HepG2 (cell line): ENCODE measurements at regions of chr6 and their contacts with region 1.

Region 1: DNA sequence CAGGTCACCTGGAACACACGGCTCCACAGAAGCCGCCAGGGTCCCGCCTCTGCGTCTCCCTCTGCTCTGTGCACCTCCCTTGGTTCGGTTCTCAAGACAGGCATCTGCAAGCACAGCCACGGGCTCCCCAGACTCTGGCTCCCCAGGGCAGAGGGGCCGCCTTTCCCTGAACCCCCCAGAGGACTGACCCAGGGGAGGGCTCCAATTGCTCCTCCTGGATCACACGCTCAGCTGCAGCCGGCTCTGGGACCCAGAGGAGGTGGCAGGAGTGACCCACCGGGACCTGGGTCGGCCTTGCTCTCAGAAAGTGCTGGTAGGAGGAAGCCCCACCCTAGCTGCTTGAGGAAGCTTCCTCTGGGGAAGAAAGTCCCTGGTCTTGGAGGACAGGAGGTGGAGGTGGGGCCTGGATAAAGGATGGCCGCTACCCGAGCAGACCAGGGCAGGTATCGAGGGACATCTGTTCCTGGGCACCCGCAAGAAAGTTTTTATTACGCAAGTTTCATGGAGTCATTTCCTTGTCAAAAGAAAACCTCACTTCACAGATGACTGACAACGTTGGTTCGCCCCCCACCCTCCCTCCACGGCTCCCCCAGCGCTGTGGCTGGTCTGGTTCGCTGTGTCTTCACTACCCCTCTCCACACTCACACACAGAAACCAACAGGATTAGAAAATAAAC is 103.9 kb upstream of the AFDN start:
- DNase-seq: no peak
- ATAC-seq: no peak
- H3K4me3 ChIP-seq: no peak overlapping the region
- H3K27ac ChIP-seq: no peak overlapping the region
- H3K4me1 ChIP-seq: peaks cover 9% of the 10 kb centered on the region
- H3K27me3 ChIP-seq: no peaks in the 10 kb centered on the region
- CTCF ChIP-seq: no peak
- EP300 ChIP-seq: no peak
- POLR2A ChIP-seq: no peak
- RAD21 ChIP-seq: no peak

Region 2: DNA sequence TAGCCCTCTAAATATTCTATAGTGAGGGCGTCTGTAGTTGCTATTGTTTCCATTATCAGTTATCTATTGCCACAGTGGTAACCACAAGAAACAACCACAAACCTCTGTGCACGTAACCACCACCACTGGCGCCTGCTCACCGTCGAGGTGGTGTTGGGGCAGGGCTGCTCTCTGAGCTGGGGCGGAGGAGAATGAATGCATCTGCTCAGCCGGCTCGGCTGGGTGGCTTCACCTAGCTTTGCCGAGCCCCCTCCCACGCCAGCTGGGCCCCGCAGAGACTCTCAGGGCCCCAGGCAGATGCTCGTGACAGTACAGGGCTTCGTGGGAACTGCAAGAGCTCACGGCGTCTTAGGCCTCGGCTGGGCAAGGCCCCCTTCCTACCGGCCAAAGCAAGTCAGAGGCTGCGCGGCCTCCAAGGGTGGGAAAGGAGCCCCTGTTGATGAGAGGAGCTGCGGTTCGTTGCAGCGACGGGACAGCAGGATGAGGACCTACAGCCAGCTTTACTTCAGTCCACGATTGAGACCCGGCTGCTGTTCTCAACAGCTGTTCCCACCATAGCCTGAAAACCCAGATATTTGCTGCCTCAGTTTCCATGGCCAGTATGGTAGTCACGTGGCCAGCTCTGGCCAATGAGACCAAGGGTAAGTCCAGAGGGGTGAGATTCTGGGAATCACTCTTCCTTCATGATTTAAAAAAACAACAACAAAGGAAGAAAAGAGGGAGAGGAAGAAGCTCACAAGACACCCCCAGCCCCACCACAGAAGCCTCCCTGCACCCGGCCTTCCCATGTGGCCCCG is 16.3 kb before region 1 on chr6:
- CTCF ChIA-PET with region 1: no interaction called
- POLR2A ChIA-PET with region 1: no interaction called
- in situ Hi-C with region 1: no loop called
- intact Hi-C with region 1: loop called (anchors 1 kb)
- DNase-seq: no peak
- ATAC-seq: no peak
- H3K4me3 ChIP-seq: no peak overlapping the region
- H3K27ac ChIP-seq: no peak overlapping the region
- H3K4me1 ChIP-seq: peaks cover 44% of the 10 kb centered on the region
- H3K27me3 ChIP-seq: no peaks in the 10 kb centered on the region; a peak in 1 of 5 replicates
- CTCF ChIP-seq: no peak
- EP300 ChIP-seq: no peak
- POLR2A ChIP-seq: no peak
- RAD21 ChIP-seq: no peak

Region 3: GRCh38 chr6:167791001-167791779 is 68.4 kb after region 1 on chr6:
- CTCF ChIA-PET with region 1: no interaction called
- POLR2A ChIA-PET with region 1: no interaction called
- in situ Hi-C with region 1: no loop called
- intact Hi-C with region 1: no loop called
- DNase-seq: peak; percentile 53
- ATAC-seq: peak; percentile 68
- H3K4me3 ChIP-seq: peak overlapping the region in 2 of 3 experiments; percentile 3 to 44; a peak in 2 of 6 replicates
- H3K27ac ChIP-seq: no peak overlapping the region
- H3K4me1 ChIP-seq: peaks cover 52% of the 10 kb centered on the region
- H3K27me3 ChIP-seq: peaks cover 0 to 2% of the 10 kb centered on the region in 2 experiments; a peak in 2 of 5 replicates
- CTCF ChIP-seq: peak; percentile 46
- EP300 ChIP-seq: no peak
- POLR2A ChIP-seq: no peak
- RAD21 ChIP-seq: peak; percentile 12; the same call in 1 of the 2 replicates